ENCODE measurements at regions of chr11 and their contacts with region 1.

Region 1: DNA sequence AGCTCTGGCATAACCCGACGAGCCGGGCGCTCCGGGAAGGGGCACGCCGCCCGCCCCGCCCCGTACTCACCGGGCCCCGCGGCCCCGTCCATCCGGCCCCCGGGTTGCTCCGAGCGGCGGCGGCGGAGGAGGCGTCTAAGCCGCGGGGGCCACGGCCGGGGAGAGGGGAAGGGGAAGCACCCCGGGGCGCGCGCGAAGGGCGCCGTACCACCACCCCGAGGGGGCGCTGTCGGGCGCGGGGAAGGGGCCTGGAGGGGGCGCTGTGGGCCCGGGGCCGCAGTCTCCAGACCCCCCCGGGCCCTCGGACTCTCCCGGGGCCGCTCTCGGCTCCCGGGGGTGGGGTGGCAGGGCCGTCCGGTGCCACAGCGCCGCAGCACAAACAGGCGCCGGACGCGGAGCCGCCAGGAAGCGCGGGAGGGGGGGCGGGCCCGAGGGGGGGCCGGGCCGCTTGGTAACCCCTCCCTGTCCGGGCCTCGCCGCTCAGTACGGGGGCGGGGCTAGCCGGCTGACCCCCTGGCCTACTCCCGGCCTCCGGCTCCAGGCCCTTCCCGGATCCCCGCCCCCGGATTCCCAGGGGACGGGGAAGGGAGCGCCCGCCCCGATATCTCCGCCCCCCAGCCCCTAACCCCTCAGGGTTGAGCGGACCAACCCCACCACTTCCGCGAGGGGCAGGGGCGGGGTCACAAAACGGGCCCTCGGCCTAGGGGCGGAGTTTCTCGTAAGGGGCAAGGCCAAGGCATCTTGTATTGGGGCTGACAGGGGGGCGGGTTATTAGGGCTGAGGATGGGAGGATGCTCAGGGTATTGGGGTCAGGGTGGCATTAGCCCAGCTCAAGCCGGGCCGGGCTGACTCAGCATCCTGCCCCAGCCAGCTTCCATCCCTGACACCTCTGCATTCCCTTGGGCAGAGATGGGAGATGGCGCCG is at the starts of genes EML3 and ROM1:
- DNase-seq: peak; percentile 86 to 91
- ATAC-seq: peak; percentile 75 to 89 (median 76)
- H3K4me3 ChIP-seq: peak within 1 kb of the TSS; percentile 64
- H3K4me3 Mint-ChIP-seq: peak within 1 kb of the TSS; percentile 96
- H3K27ac ChIP-seq: peak within 1 kb of the TSS; percentile 89
- H3K27ac Mint-ChIP-seq: peak within 1 kb of the TSS; percentile 95 to 98
- H3K4me1 ChIP-seq: peaks cover 27% of the 10 kb centered on the region
- H3K4me1 Mint-ChIP-seq: peaks cover 18 to 52% of the 10 kb centered on the region in 2 donors
- H3K27me3 ChIP-seq: no peaks in the 10 kb centered on the region
- H3K27me3 Mint-ChIP-seq: no peaks in the 10 kb centered on the region
- CTCF ChIP-seq: peak; percentile 97
- total RNA-seq, gene EML3: 221 to 233 (median 232) TPM
- total RNA-seq, gene ROM1: 2.6 to 6.9 (median 3.9) TPM

Region 2: DNA sequence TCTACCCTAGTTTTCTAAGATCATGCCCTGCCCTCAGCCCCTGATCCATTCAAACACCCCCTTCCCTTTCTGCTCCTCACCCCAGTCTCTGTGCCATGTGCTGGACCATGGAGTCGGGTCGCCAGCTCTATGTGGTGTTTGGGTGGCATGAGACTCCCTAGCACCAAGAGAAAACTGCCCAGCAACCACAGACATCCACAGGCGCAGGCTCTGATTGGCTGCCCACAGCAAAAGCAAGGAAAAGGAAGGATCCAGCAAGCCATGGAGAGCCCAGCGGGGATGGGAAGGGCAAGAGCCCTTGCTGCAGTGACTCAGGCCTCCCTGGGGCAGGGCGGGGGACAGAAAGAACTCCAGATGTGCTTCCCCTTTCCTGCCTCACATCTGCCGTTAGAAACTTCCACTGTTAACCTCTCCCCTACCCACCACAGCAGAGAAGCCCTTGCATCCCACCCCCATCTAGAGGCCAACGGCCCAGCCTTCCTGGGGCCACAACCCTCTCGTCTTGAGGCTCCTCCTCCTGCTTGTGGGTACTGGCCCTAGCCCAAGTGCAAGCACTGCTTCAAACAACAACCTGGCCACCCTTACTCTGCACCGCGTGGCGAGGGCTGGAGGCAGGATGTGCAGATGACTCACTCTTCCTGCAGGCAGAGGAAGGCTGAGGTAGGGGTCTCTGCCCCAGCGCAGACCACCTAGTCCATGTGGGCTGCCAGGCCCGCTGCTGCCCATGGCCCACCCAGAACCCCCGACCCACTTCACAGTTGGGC is 56.3 kb before region 1 on chr11:
- intact Hi-C with region 1: no loop called
- DNase-seq: peak; percentile 81 to 93
- ATAC-seq: peak; percentile 53 to 79 (median 69)
- H3K4me3 ChIP-seq: peak overlapping the region; percentile 12
- H3K4me3 Mint-ChIP-seq: peak overlapping the region; percentile 93
- H3K27ac ChIP-seq: peak overlapping the region; percentile 97
- H3K27ac Mint-ChIP-seq: peak overlapping the region; percentile 97 to 98
- H3K4me1 ChIP-seq: peaks cover 92% of the 10 kb centered on the region
- H3K4me1 Mint-ChIP-seq: peaks cover 85 to 96% of the 10 kb centered on the region in 2 donors
- H3K27me3 ChIP-seq: no peaks in the 10 kb centered on the region
- H3K27me3 Mint-ChIP-seq: no peaks in the 10 kb centered on the region
- CTCF ChIP-seq: no peak

Region 3: DNA sequence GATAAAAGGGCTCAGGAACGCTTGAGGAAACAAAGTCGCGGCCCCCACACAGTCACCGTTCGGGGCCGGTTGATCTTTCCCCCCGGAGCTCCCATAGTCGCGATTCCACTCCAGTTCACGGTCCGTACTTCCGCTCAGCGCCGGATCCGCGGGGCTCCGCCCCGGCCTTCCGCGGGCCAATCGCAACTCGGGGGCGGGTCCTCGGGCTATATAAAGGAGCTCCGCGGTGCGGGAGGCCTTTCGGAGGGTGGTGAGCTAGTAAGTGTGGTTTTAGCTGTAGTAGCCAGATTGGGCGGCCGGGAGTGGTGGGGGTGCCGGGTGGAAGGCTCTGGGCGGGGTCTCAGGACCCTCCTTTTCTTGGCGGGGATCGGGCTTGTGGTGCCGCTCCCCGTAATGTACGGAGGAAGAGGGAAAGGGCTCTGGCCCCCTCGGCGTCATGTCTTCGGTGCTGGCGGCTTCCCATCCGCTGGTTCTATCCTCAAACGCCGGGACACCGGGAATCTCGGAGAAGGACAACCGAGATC is 52.5 kb after region 1 on chr11 and contains the starts of genes C11orf98 and CSKMT:
- intact Hi-C with region 1: loop called (anchors 2 kb)
- DNase-seq: peak; percentile 96
- ATAC-seq: peak; percentile 92 to 97 (median 95)
- H3K4me3 ChIP-seq: peak within 1 kb of the TSS; percentile 87
- H3K4me3 Mint-ChIP-seq: peak within 1 kb of the TSS; percentile 96
- H3K27ac ChIP-seq: peak within 1 kb of the TSS; percentile 80
- H3K27ac Mint-ChIP-seq: peak within 1 kb of the TSS; percentile 87 to 95
- H3K4me1 ChIP-seq: peaks cover 28% of the 10 kb centered on the region
- H3K4me1 Mint-ChIP-seq: peaks cover 6 to 29% of the 10 kb centered on the region in 2 donors
- H3K27me3 ChIP-seq: no peaks in the 10 kb centered on the region
- H3K27me3 Mint-ChIP-seq: no peaks in the 10 kb centered on the region
- CTCF ChIP-seq: no peak
- total RNA-seq, gene C11orf98: 36.5 to 57.9 (median 39.1) TPM
- total RNA-seq, gene CSKMT: 12.0 to 21.5 (median 13.7) TPM

Measured in natural killer cell (primary cell).